HepG2 (cell line): ENCODE measurements at regions of chr6 and their contacts with region 1.

Region 1: GRCh38 chr6:167760979-167761793 is 65.5 kb upstream of the AFDN start:
- DNase-seq: peak; percentile 85
- ATAC-seq: peak; percentile 74
- H3K4me3 ChIP-seq: peak overlapping the region; percentile 23 to 68 (median 50); a peak in 5 of 6 replicates
- H3K27ac ChIP-seq: peak overlapping the region; percentile 97
- H3K4me1 ChIP-seq: peaks cover 82% of the 10 kb centered on the region
- H3K27me3 ChIP-seq: no peaks in the 10 kb centered on the region
- CTCF ChIP-seq: no peak
- EP300 ChIP-seq: peak in 1 of 2 experiments; percentile 61; a peak in 1 of 4 replicates
- POLR2A ChIP-seq: peak; percentile 72 to 82
- RAD21 ChIP-seq: no peak

Region 2: DNA sequence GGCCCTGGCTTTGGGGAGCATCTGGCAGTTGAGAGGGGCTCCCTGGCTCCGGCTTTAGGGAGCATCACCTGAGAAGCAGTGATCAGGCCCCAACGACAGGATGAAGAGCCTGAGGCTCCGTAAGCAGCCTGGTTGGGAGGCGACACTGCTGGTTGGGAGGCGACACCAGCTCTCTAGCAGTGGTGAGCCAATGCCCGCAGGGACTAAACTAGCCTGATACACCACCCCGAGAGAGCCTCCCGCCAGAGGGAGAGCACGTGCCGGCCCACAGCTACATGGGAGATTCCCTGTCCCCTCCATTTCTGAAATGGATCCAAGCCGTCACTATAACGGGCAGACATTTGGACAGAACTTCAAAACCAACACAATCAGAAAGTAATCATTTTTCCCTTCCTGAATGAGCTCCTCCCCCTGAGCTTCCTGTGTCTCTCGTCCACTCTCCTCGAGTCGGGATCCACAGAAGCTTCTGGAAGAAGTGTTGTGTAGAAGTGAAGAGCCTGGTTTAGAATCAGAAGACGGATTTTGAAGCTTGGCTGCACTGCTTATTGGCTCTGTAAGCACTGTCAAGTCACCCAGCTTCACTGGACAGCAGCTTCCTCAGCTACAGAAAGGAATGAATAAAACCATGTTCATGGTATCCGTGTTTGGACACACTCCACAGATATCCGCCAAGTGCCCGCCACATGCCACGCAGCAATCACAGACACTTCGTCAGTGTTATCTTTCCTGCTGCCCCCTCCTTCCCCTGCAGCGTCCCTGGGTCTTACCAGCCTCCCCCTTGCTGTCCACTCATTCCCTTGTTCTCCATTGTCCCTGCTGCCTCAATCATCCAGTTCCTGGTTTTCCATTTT is 236.7 kb before region 1 on chr6:
- CTCF ChIA-PET with region 1: no interaction called
- POLR2A ChIA-PET with region 1: no interaction called
- in situ Hi-C with region 1: no loop called
- intact Hi-C with region 1: no loop called
- DNase-seq: no peak
- ATAC-seq: no peak
- H3K4me3 ChIP-seq: no peak overlapping the region
- H3K27ac ChIP-seq: no peak overlapping the region
- H3K4me1 ChIP-seq: peaks cover 7% of the 10 kb centered on the region
- H3K27me3 ChIP-seq: peaks cover 2 to 54% of the 10 kb centered on the region in 2 experiments; a peak in 4 of 5 replicates
- CTCF ChIP-seq: no peak
- EP300 ChIP-seq: no peak
- POLR2A ChIP-seq: no peak
- RAD21 ChIP-seq: no peak

Region 3: GRCh38 chr6:167676666-167677421 is 84.3 kb before region 1 on chr6:
- CTCF ChIA-PET with region 1: no interaction called
- POLR2A ChIA-PET with region 1: interaction called, 30 read pairs
- in situ Hi-C with region 1: no loop called
- intact Hi-C with region 1: loop called (anchors 1 kb)
- DNase-seq: peak; percentile 44
- ATAC-seq: peak; percentile 2; the same call in 1 of the 3 replicates
- H3K4me3 ChIP-seq: 0 out of 6 replicates have a peak overlapping the region, but pooled peaks of 1 of the 3 experiments have one; percentile 71
- H3K27ac ChIP-seq: peak overlapping the region; percentile 96
- H3K4me1 ChIP-seq: peaks cover 98% of the 10 kb centered on the region
- H3K27me3 ChIP-seq: no peaks in the 10 kb centered on the region
- CTCF ChIP-seq: no peak
- EP300 ChIP-seq: no peak
- POLR2A ChIP-seq: peak in 1 of 2 experiments; percentile 15; a peak in 1 of 4 replicates
- RAD21 ChIP-seq: no peak

Region 4: GRCh38 chr6:167733740-167734661 is 27.2 kb before region 1 on chr6:
- CTCF ChIA-PET with region 1: no interaction called
- POLR2A ChIA-PET with region 1: interaction called, 26 read pairs
- in situ Hi-C with region 1: no loop called
- intact Hi-C with region 1: loop called (anchors 1 kb)
- DNase-seq: peak; percentile 99
- ATAC-seq: peak; percentile 85
- H3K4me3 ChIP-seq: peak overlapping the region in 1 of 3 experiments; percentile 47; a peak in 2 of 6 replicates
- H3K27ac ChIP-seq: peak overlapping the region; percentile 74
- H3K4me1 ChIP-seq: peaks cover 53% of the 10 kb centered on the region
- H3K27me3 ChIP-seq: no peaks in the 10 kb centered on the region
- CTCF ChIP-seq: peak; percentile 20; the same call in 1 of the 2 replicates
- EP300 ChIP-seq: peak; percentile 97 to 99
- POLR2A ChIP-seq: peak; percentile 34 to 82; a peak in 3 of 4 replicates
- RAD21 ChIP-seq: peak; percentile 55

Region 5: GRCh38 chr6:167750956-167751386 is 10.2 kb before region 1 on chr6:
- CTCF ChIA-PET with region 1: no interaction called
- POLR2A ChIA-PET with region 1: interaction called, 17 read pairs
- in situ Hi-C with region 1: no loop called
- intact Hi-C with region 1: no loop called
- DNase-seq: peak; percentile 77
- ATAC-seq: peak; percentile 82
- H3K4me3 ChIP-seq: no peak overlapping the region
- H3K27ac ChIP-seq: no peak overlapping the region
- H3K4me1 ChIP-seq: peaks cover 55% of the 10 kb centered on the region
- H3K27me3 ChIP-seq: no peaks in the 10 kb centered on the region
- CTCF ChIP-seq: no peak
- EP300 ChIP-seq: 0 out of 4 replicates have a peak, but pooled peaks of 1 of the 2 experiments have one; percentile 4
- POLR2A ChIP-seq: no peak
- RAD21 ChIP-seq: no peak

Region 6: DNA sequence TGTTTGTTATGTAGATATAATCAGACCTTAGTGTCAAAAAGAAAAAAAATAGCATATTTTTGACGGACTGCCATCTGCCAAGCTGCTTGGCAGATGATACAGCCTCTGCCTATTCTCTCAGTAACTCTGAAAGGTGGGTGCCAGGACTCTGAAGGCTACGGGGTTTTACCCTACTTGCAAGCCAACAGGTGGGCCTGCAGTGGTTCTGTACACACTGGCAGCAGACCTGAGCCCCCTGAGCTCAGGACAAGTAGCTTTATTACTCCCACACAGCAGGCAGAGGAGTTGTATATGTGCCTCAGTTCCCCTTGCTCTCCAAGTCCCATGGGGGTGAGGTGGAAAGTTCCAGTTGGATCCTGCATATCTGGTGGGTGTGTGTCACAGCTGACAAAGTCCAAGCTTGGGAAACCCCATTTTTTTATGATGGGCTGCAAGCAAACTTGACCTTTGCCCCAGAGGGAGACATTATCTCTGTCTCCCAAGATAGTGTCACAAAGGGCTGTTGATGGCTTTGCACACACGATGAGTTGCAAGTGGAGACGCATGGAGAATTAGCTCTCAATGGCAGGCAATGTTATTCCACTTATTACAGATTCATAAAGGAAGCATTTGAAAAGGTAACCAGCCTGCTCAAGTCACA is 45.0 kb after region 1 on chr6:
- CTCF ChIA-PET with region 1: no interaction called
- POLR2A ChIA-PET with region 1: interaction called, 16 read pairs
- in situ Hi-C with region 1: no loop called
- intact Hi-C with region 1: no loop called
- DNase-seq: peak; percentile 93
- ATAC-seq: peak; percentile 72
- H3K4me3 ChIP-seq: no peak overlapping the region
- H3K27ac ChIP-seq: peak overlapping the region; percentile 45
- H3K4me1 ChIP-seq: peaks cover 62% of the 10 kb centered on the region
- H3K27me3 ChIP-seq: no peaks in the 10 kb centered on the region
- CTCF ChIP-seq: 0 out of 2 replicates have a peak, but pooled peaks have one; percentile 11
- EP300 ChIP-seq: peak in 1 of 2 experiments; percentile 92; a peak in 2 of 4 replicates
- POLR2A ChIP-seq: no peak
- RAD21 ChIP-seq: peak; percentile 18; the same call in 1 of the 2 replicates